ENCODE measurements at regions of chr7 and their contacts with region 1.

Region 1: GRCh38 chr7:37901236-37901827 is 15.3 kb downstream of the SFRP4 start:
- DNase-seq: peak; percentile 53
- H3K4me3 Mint-ChIP-seq: no peak overlapping the region
- H3K27ac Mint-ChIP-seq: no peak overlapping the region
- H3K4me1 Mint-ChIP-seq: no peaks in the 10 kb centered on the region
- H3K27me3 Mint-ChIP-seq: peaks cover 35% of the 10 kb centered on the region
- CTCF ChIP-seq: peak; percentile 44

Region 2: GRCh38 chr7:37916673-37917660 is 15.6 kb after region 1 on chr7 and contains the start of gene SFRP4:
- CTCF ChIA-PET with region 1: interaction called, 22 read pairs
- POLR2A ChIA-PET with region 1: no interaction called
- intact Hi-C with region 1: no loop called
- DNase-seq: peak; percentile 52
- H3K4me3 Mint-ChIP-seq: no peak within 1 kb of the TSS
- H3K27ac Mint-ChIP-seq: no peak within 1 kb of the TSS
- H3K4me1 Mint-ChIP-seq: no peaks in the 10 kb centered on the region
- H3K27me3 Mint-ChIP-seq: peaks cover 38% of the 10 kb centered on the region
- CTCF ChIP-seq: peak; percentile 56
- total RNA-seq, gene SFRP4: not detected in 2 replicates

Region 3: GRCh38 chr7:38027884-38028455 is 126.6 kb after region 1 on chr7:
- CTCF ChIA-PET with region 1: no interaction called
- POLR2A ChIA-PET with region 1: no interaction called
- intact Hi-C with region 1: no loop called
- DNase-seq: no peak
- H3K4me3 Mint-ChIP-seq: no peak overlapping the region
- H3K27ac Mint-ChIP-seq: no peak overlapping the region
- H3K4me1 Mint-ChIP-seq: no peaks in the 10 kb centered on the region
- H3K27me3 Mint-ChIP-seq: peaks cover 28% of the 10 kb centered on the region
- CTCF ChIP-seq: no peak

Region 4: DNA sequence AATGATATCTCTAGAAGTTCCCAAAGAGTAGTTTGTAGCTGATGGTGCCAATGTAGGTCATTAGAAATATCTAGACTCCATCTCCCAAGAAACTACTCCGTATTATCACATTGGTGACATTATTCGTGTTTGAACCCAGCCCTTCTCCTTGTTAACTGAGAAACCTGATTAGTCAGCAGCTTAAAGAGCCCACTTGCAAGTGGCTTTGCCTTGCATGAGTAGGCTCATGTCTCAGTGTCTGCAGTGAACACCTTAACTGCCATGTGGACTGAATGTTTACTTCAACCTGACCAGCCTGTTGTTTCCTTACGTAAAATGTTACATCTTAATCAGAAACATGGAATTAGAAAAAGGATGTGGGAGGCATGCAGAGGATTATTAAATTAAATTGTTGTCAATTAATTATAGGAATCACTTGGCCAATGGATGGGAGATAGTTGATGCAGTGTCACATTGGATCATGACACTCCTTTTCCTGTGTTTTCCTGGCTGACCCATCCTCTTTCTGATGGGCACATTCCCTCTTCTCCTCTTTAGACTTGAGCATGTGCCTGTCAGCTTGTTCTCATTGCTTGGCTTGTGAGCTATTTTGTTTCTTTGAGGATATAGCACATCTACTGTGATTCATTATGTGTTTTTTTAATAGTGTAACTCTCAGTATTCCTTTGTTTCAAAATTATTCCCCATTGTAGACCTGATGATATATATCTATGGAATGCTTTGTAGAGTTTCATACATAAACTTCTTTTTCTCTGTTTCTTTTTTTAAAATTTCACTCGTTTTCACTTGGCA is 294.7 kb after region 1 on chr7:
- CTCF ChIA-PET with region 1: interaction called, 11 read pairs
- POLR2A ChIA-PET with region 1: no interaction called
- intact Hi-C with region 1: no loop called
- DNase-seq: peak; percentile 55
- H3K4me3 Mint-ChIP-seq: peak overlapping the region; percentile 62
- H3K27ac Mint-ChIP-seq: peak overlapping the region; percentile 97
- H3K4me1 Mint-ChIP-seq: peaks cover 22% of the 10 kb centered on the region
- H3K27me3 Mint-ChIP-seq: no peaks in the 10 kb centered on the region
- CTCF ChIP-seq: no peak

Region 5: GRCh38 chr7:38229386-38229785 is 328.1 kb after region 1 on chr7:
- CTCF ChIA-PET with region 1: interaction called, 13 read pairs
- POLR2A ChIA-PET with region 1: no interaction called
- intact Hi-C with region 1: no loop called
- DNase-seq: peak; percentile 20
- H3K4me3 Mint-ChIP-seq: no peak overlapping the region
- H3K27ac Mint-ChIP-seq: no peak overlapping the region
- H3K4me1 Mint-ChIP-seq: no peaks in the 10 kb centered on the region
- H3K27me3 Mint-ChIP-seq: no peaks in the 10 kb centered on the region
- CTCF ChIP-seq: no peak

Region 6: DNA sequence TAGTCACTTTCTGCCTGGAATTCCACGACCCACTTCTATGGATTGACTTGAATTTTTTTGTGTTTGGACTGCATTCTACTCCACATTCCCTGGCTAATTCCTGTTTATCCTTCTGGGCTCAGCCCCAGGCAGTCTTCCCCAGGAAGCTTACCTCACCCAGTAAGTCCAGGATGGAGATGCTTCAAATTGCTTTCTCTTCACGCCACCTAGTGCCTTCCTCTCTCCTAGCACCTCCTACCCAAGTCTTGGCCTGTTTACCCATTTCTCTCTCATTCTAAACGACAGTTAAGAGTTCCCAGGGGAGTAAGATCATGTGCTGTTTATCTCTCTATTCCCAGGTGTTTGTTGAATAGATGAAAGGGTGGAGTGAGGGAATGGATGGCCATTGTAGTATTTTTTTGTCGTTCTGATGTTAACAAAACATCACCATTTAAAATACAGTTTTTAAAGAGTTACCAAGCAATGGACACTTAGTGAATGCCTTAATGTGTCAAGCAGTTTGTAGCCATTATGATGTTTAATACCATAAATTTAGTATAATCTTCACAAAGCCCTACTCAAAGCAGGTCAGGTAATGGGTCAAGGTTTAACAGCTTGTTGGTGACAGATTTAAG is 417.6 kb after region 1 on chr7:
- CTCF ChIA-PET with region 1: interaction called, 9 read pairs
- POLR2A ChIA-PET with region 1: interaction called, 4 read pairs
- intact Hi-C with region 1: loop called (anchors 2 kb)
- DNase-seq: peak; percentile 68
- H3K4me3 Mint-ChIP-seq: no peak overlapping the region
- H3K27ac Mint-ChIP-seq: no peak overlapping the region
- H3K4me1 Mint-ChIP-seq: peaks cover 7% of the 10 kb centered on the region
- H3K27me3 Mint-ChIP-seq: peaks cover 26% of the 10 kb centered on the region
- CTCF ChIP-seq: peak; percentile 49